ENCODE measurements at regions of chr7 and their contacts with region 1.

Region 1: GRCh38 chr7:139645572-139646523 is 122.4 kb downstream of the CLEC2L start:
- DNase-seq: peak; percentile 91
- H3K4me3 Mint-ChIP-seq: no peak overlapping the region
- H3K27ac Mint-ChIP-seq: peak overlapping the region; percentile 73
- H3K4me1 Mint-ChIP-seq: peaks cover 64% of the 10 kb centered on the region
- H3K27me3 Mint-ChIP-seq: no peaks in the 10 kb centered on the region

Region 2: DNA sequence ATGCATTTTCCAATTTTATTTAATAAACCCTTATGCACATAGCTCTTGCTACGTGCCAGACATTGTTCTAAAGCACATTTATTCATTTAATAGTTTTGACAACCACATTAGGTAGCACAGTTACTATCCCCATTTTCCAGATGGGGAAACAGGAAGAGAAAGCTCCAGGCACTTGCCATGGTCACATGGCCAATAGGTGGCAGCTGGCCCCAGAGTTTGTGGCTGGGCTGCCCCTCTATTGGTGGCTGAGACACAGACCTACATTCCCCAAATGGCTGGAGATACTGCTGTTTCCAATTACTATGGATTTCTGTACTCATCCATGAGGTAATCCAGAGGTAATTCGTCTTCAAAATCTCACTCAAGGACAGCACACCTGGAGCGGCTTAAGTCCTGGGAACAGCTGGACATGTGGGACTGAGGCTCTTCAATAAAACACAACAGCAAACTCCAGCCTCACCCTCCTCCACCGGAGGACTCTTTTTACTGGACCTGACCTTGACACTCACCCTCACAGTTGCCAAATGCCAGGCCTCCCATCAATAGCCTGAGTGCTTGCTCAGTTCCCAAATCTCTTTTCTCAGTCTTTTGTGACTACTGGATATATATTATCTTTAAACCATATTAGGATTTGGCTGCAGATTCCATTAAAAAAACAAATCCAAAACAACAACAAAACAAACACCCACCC is 16.3 kb before region 1 on chr7:
- CTCF ChIA-PET with region 1: interaction called, 12 read pairs
- POLR2A ChIA-PET with region 1: no interaction called
- DNase-seq: no peak
- H3K4me3 Mint-ChIP-seq: no peak overlapping the region
- H3K27ac Mint-ChIP-seq: peak overlapping the region; percentile 82
- H3K4me1 Mint-ChIP-seq: peaks cover 77% of the 10 kb centered on the region
- H3K27me3 Mint-ChIP-seq: no peaks in the 10 kb centered on the region

Region 3: DNA sequence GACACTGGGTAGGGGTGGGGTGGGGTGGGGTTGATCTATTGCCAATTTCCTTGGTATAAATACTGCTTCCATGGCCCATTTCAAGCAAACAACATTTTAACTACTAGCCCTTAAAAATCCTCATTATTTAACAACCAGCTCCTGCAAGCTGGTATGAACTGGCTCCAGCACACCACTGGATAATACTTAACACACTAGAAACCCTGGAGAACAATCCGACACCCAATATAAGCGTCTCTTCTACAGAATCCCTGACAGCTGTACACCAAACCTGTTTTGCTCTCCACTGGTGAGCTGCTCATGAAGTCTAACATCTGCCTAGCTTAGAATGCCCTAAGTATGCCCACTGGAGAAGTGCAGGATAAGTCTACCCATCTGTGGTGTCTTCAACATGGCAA is 15.2 kb after region 1 on chr7:
- CTCF ChIA-PET with region 1: interaction called, 21 read pairs
- POLR2A ChIA-PET with region 1: no interaction called
- DNase-seq: no peak
- H3K4me3 Mint-ChIP-seq: no peak overlapping the region
- H3K27ac Mint-ChIP-seq: no peak overlapping the region
- H3K4me1 Mint-ChIP-seq: peaks cover 25% of the 10 kb centered on the region
- H3K27me3 Mint-ChIP-seq: no peaks in the 10 kb centered on the region

Region 4: GRCh38 chr7:139674752-139675126 is 28.9 kb after region 1 on chr7:
- CTCF ChIA-PET with region 1: no interaction called
- POLR2A ChIA-PET with region 1: no interaction called
- DNase-seq: no peak
- H3K4me3 Mint-ChIP-seq: no peak overlapping the region
- H3K27ac Mint-ChIP-seq: no peak overlapping the region
- H3K4me1 Mint-ChIP-seq: peaks cover 36% of the 10 kb centered on the region
- H3K27me3 Mint-ChIP-seq: no peaks in the 10 kb centered on the region

Region 5: DNA sequence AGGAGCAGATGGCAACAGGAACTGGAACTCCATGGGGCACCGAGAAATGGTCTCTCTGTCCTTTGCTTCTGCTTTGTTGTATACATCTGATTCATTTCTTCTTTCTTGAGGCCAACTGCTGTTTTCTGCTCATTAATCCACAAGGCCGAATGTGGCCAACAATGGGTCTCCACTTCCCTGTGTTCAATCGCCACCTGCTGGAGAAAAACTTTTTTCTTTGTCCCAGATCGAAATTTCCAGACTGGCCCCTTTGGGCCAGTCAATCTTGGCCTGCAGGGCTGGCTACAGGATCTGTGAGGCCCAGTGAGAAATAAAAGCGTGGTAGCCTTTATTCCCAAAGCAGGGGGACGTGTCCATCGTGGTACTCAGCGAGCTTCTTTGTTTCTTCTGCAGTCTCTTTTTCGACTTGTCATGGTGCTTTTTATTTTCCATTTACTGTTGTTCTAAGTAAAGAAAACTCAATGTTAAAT is 358.1 kb after region 1 on chr7:
- CTCF ChIA-PET with region 1: interaction called, 13 read pairs
- POLR2A ChIA-PET with region 1: no interaction called
- DNase-seq: peak; percentile 57
- H3K4me3 Mint-ChIP-seq: no peak overlapping the region
- H3K27ac Mint-ChIP-seq: no peak overlapping the region
- H3K4me1 Mint-ChIP-seq: no peaks in the 10 kb centered on the region
- H3K27me3 Mint-ChIP-seq: no peaks in the 10 kb centered on the region